ENCODE measurements at regions of chr3 and their contacts with region 1.

Region 1: GRCh38 chr3:183895296-183895695 is 10.6 kb upstream of the PARL start:
- DNase-seq: peak; percentile 63 to 80 (median 76)
- ATAC-seq: peak; percentile 85
- H3K4me3 ChIP-seq: no peak overlapping the region
- H3K27ac ChIP-seq: no peak overlapping the region
- H3K4me1 ChIP-seq: 0 out of 5 replicates have a peak, but pooled peaks cover 0 to 3% of the 10 kb centered on the region in 2 experiments
- H3K27me3 ChIP-seq: peaks cover 19 to 35% of the 10 kb centered on the region in 2 experiments; a peak in 4 of 5 replicates
- CTCF ChIP-seq: peak; percentile 79 to 95 (median 83)
- EP300 ChIP-seq: no peak
- POLR2A ChIP-seq: no peak
- RAD21 ChIP-seq: peak; percentile 79 to 80

Region 2: DNA sequence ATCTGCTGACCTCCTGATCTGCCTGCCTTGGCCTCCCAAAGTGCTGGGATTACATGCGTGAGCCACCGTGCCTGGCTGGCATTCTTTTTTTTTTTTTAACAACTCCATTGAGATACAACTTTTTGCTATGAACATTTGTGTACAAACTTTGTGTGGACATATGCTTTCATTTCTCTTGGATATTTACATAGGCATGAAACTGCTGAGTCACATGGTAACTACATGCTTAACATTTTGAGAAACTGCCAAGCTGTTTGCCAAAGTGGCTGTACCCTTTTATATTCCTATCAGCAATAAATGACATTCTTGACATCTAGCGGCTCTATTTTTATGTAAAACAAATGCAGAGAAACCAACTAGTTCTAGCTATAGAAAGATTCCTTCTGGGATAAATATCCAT is 206.4 kb before region 1 on chr3:
- CTCF ChIA-PET with region 1: no interaction called
- POLR2A ChIA-PET with region 1: no interaction called
- in situ Hi-C with region 1: no loop called
- intact Hi-C with region 1: no loop called
- DNase-seq: no peak
- ATAC-seq: no peak
- H3K4me3 ChIP-seq: no peak overlapping the region
- H3K27ac ChIP-seq: no peak overlapping the region
- H3K4me1 ChIP-seq: no peaks in the 10 kb centered on the region; a peak in 1 of 5 replicates
- H3K27me3 ChIP-seq: no peaks in the 10 kb centered on the region
- CTCF ChIP-seq: no peak
- EP300 ChIP-seq: no peak
- POLR2A ChIP-seq: no peak
- RAD21 ChIP-seq: no peak

Region 3: GRCh38 chr3:183775781-183776180 is 119.5 kb before region 1 on chr3:
- CTCF ChIA-PET with region 1: no interaction called
- POLR2A ChIA-PET with region 1: no interaction called
- in situ Hi-C with region 1: no loop called
- intact Hi-C with region 1: no loop called
- DNase-seq: peak in 1 of 4 experiments; percentile 7
- ATAC-seq: no peak
- H3K4me3 ChIP-seq: no peak overlapping the region
- H3K27ac ChIP-seq: no peak overlapping the region
- H3K4me1 ChIP-seq: no peaks in the 10 kb centered on the region; a peak in 1 of 5 replicates
- H3K27me3 ChIP-seq: no peaks in the 10 kb centered on the region
- CTCF ChIP-seq: no peak
- EP300 ChIP-seq: no peak
- POLR2A ChIP-seq: no peak
- RAD21 ChIP-seq: no peak

Region 4: DNA sequence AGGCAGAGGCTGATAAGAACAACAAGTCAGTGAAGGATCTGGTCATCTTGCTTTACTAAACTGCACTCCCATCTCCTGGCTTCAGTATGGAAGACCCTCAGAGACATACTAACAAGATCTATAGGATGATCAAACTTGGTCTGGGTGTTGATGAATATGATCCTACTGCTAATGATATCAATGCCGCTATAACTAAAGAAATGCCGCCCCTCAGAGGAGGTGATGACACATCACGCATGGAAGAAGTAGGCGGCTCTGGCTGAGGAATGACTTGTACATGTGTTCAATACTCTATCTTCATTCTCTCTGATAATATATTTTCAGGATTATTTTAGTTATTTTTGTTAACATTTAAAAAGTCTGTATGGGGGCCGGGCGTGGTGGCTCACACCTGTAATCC is 222.3 kb after region 1 on chr3:
- CTCF ChIA-PET with region 1: no interaction called
- POLR2A ChIA-PET with region 1: no interaction called
- in situ Hi-C with region 1: loop called (anchors 5 kb)
- intact Hi-C with region 1: loop called (anchors 2 kb)
- DNase-seq: peak in 1 of 4 experiments; percentile 20
- ATAC-seq: peak; percentile 72
- H3K4me3 ChIP-seq: no peak overlapping the region
- H3K27ac ChIP-seq: no peak overlapping the region
- H3K4me1 ChIP-seq: no peaks in the 10 kb centered on the region; a peak in 1 of 5 replicates
- H3K27me3 ChIP-seq: peaks cover 0 to 4% of the 10 kb centered on the region in 2 experiments; a peak in 1 of 5 replicates
- CTCF ChIP-seq: peak in 2 of 3 experiments; percentile 19 to 51; a peak in 4 of 6 replicates
- EP300 ChIP-seq: no peak
- POLR2A ChIP-seq: no peak
- RAD21 ChIP-seq: peak; percentile 52 to 78

Region 5: GRCh38 chr3:184241447-184242296 is 346.4 kb after region 1 on chr3:
- CTCF ChIA-PET with region 1: interaction called, 17 read pairs
- POLR2A ChIA-PET with region 1: interaction called, 3 read pairs
- in situ Hi-C with region 1: no loop called
- intact Hi-C with region 1: no loop called
- DNase-seq: peak; percentile 65 to 82 (median 74)
- ATAC-seq: peak; percentile 97
- H3K4me3 ChIP-seq: no peak overlapping the region
- H3K27ac ChIP-seq: no peak overlapping the region
- H3K4me1 ChIP-seq: peaks cover 0 to 19% of the 10 kb centered on the region in 2 experiments; a peak in 3 of 5 replicates
- H3K27me3 ChIP-seq: peaks cover 0 to 12% of the 10 kb centered on the region in 2 experiments; a peak in 1 of 5 replicates
- CTCF ChIP-seq: peak; percentile 79 to 93 (median 84)
- EP300 ChIP-seq: no peak
- POLR2A ChIP-seq: no peak; the same call in none of the 2 replicates
- RAD21 ChIP-seq: peak; percentile 59 to 85